ENCODE measurements at regions of chr15 and their contacts with region 1.

Region 1: GRCh38 chr15:38252481-38253412 is at the start of gene SPRED1:
- H3K4me3 Mint-ChIP-seq: peak within 1 kb of the TSS; percentile 92
- H3K27ac Mint-ChIP-seq: peak within 1 kb of the TSS; percentile 97
- H3K4me1 Mint-ChIP-seq: peaks cover 24% of the 10 kb centered on the region
- H3K27me3 Mint-ChIP-seq: peaks cover 11% of the 10 kb centered on the region

Region 2: DNA sequence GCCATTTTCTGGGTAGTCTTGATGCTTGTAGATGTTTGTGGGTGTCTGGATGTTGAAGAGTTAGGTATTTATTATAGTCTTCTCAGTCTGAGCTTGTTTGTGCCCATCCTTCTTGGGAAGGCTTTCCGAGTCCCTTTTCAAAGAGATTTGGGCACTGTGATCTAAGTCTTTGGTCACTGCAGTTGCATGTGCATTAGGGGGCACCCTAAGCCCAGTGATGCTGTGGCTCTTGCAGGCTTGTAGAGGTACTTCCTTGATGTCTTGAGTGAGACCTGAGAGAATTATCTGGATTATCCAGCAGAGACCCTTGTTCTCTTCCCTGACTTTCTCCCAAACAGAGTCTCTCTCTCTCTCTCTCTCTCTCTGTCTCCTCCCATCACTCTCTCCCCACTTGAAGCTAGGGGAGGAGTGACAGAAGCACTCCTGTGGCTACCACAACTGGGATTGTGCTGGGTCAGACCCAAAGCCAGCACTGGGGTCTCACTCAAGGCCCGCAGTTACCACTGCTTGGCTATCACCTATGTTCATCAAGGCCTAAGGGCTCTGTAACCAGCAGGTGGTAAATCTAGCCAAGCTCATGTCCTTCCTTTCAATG is 249.8 kb before region 1 on chr15:
- intact Hi-C with region 1: loop called (anchors 2 kb)
- H3K4me3 Mint-ChIP-seq: no peak overlapping the region
- H3K27ac Mint-ChIP-seq: peak overlapping the region; percentile 92
- H3K4me1 Mint-ChIP-seq: peaks cover 49% of the 10 kb centered on the region
- H3K27me3 Mint-ChIP-seq: peaks cover 4% of the 10 kb centered on the region

Region 3: GRCh38 chr15:38050529-38051448 is 202.0 kb before region 1 on chr15:
- intact Hi-C with region 1: loop called (anchors 2 kb)
- H3K4me3 Mint-ChIP-seq: peak overlapping the region; percentile 30
- H3K27ac Mint-ChIP-seq: peak overlapping the region; percentile 99
- H3K4me1 Mint-ChIP-seq: peaks cover 85% of the 10 kb centered on the region
- H3K27me3 Mint-ChIP-seq: no peaks in the 10 kb centered on the region

Region 4: DNA sequence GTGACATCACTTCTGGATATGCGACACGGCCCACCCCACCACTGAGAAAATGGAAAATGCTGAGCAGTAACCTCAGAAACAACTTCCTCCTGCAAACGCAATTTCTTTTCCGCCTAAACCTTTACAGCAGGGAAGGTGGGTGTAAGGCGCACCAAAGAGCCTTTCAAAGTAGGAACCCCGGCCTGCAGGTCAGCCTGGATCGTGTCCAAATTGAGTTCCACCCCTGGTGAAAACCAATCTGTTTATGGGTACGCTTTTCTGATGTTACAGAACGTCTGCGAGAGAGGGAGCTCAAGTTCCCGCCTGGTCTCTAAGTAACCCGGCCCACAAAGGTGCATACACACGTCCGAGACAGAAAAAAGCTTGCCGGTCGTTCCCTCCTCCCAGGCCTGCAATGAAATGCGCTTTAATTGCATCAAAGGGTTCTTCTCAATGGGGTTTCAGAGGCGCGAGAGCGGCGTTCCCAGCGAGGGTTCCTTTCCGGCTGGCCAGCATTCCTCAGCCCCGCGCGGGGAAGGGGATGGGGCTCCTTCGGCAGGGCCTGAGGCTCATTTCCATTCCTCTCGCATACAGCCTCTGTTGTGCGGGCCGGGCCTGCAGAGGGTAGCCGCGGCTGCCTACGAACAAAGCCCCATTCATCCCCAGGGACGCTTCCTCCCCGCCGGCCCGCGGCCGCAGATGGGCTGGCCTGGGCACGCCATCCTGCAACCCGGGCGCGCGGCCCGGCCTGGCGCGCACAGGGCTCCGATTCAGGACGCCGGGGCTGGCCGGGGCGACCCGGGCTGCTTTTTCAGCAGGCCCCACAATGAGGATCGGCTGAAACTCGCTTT is 180.2 kb before region 1 on chr15:
- intact Hi-C with region 1: loop called (anchors 5 kb)
- H3K4me3 Mint-ChIP-seq: peak overlapping the region; percentile 69
- H3K27ac Mint-ChIP-seq: peak overlapping the region; percentile 99
- H3K4me1 Mint-ChIP-seq: peaks cover 78% of the 10 kb centered on the region
- H3K27me3 Mint-ChIP-seq: peaks cover 21% of the 10 kb centered on the region

Region 5: DNA sequence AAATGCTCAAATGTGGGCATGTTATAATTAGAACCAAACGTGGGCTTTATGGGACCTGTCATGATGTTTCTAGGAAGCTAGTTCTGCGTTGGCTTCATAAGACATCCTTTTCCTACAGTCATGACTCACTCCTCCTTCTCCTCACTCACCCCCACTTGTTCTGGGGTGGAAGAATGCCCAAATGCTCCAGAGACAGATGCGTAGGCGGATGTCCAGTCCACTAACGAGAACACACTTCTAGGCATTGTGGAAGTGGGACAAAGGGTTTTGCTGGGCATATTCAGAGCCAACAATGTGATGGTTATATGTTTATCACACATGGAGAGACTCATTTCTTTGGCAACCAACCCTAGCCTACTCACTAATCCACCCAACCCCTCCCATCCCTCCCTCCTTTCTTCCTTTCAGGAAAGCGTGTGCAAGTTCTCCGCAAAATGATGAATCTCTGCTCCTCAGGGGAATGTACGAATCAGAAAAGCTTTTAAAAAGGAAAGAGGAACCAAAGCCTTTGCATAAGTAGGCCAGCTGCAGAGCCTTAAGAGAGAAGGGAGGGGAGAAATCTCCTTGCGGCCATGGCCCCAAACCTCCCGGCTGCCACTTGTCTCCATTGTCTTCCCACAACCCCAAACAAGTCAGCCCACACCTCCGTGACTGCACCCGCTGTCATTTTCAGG is 123.1 kb before region 1 on chr15:
- intact Hi-C with region 1: loop called (anchors 1 kb)
- H3K4me3 Mint-ChIP-seq: peak overlapping the region; percentile 55
- H3K27ac Mint-ChIP-seq: peak overlapping the region; percentile 96
- H3K4me1 Mint-ChIP-seq: peaks cover 70% of the 10 kb centered on the region
- H3K27me3 Mint-ChIP-seq: peaks cover 4% of the 10 kb centered on the region

Region 6: DNA sequence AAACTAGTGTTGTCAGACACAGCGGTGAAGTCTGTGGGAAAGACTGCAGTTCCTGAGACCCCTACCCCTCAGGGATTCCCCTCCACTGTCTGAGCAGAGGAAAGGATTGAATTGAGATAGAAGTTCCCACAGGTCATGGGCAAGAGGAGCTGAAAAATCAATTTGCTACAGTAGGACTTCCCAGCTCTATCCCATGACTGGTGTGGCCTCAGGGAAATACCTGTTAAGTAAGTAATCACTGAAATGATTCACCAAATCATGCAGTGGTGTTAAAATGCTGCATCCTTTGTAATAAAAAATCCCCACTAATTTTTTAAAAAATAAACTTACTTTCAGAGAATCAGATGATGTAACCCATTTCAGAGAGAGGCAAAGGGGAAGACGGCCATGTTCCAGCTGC is 45.1 kb before region 1 on chr15:
- intact Hi-C with region 1: loop called (anchors 5 kb)
- H3K4me3 Mint-ChIP-seq: no peak overlapping the region
- H3K27ac Mint-ChIP-seq: peak overlapping the region; percentile 77
- H3K4me1 Mint-ChIP-seq: peaks cover 38% of the 10 kb centered on the region
- H3K27me3 Mint-ChIP-seq: peaks cover 14% of the 10 kb centered on the region

Region 7: DNA sequence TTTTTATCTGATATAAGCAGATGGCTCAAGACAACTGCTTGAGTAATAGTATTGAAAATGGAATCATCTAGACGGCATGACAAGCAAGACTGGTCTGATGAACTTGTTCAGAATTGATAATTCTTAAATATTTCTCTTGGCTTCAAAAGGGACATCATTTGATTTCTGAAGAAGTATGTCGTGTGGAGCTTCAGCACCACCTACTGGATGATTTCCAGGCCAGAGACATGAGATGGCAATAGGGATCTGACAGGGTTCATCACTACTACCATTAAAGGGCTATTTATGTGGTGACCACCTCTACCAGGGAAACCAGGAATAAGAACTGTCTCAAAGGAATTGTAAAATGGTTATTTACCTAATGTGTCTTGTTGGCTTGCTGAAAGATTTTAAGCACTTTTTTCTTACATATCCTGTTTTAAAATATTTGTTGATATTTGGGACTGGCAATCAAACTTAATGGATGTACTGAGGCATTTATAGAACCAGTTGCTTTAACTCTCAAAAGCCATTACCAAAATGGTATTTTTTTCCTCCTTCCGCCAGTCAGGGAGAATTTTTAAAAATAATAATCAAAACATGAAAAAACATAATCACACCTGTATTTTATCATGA is 101.7 kb after region 1 on chr15:
- intact Hi-C with region 1: loop called (anchors 10 kb)
- H3K4me3 Mint-ChIP-seq: no peak overlapping the region
- H3K27ac Mint-ChIP-seq: no peak overlapping the region
- H3K4me1 Mint-ChIP-seq: peaks cover 12% of the 10 kb centered on the region
- H3K27me3 Mint-ChIP-seq: no peaks in the 10 kb centered on the region

Measured in dendritic cell treated with granulocyte-macrophage colony-stimulating factor and Interleukin-4, amounts not matched to agents 40 ng/mL and 50 ng/mL, for 4 days (primary cell).